ENCODE measurements at regions of chrX and their contacts with region 1.

Region 1: GRCh38 chrX:49043220-49043986 is at the start of gene TFE3:
- DNase-seq: peak; percentile 97 to 99
- ATAC-seq: peak; percentile 90 to 93
- H3K4me3 ChIP-seq: peak within 1 kb of the TSS; percentile 76 to 87 (median 79)
- H3K27ac ChIP-seq: peak within 1 kb of the TSS; percentile 93 to 100 (median 98)
- H3K4me1 ChIP-seq: peaks cover 9% of the 10 kb centered on the region in 2 donors
- H3K27me3 ChIP-seq: no peaks in the 10 kb centered on the region
- CTCF ChIP-seq: peak; percentile 41 to 64 (median 63)
- POLR2A ChIP-seq: peak; percentile 72 to 76
- total RNA-seq, gene TFE3: 29.3 to 44.5 (median 34.7) TPM

Region 2: GRCh38 chrX:48891402-48892288 is 151.8 kb before region 1 on chrX:
- in situ Hi-C with region 1: no loop called
- intact Hi-C with region 1: loop called (anchors 5 kb)
- DNase-seq: peak; percentile 76 to 81
- ATAC-seq: peak; percentile 96 to 97
- H3K4me3 ChIP-seq: peak overlapping the region; percentile 64 to 75 (median 68)
- H3K27ac ChIP-seq: peak overlapping the region; percentile 49 to 84 (median 78)
- H3K4me1 ChIP-seq: peaks cover 5 to 8% of the 10 kb centered on the region in 2 donors
- H3K27me3 ChIP-seq: no peaks in the 10 kb centered on the region
- CTCF ChIP-seq: peak; percentile 25 to 64 (median 52)
- POLR2A ChIP-seq: peak in 1 of 2 donors; percentile 4

Region 3: GRCh38 chrX:48917139-48918001 is 126.0 kb before region 1 on chrX:
- in situ Hi-C with region 1: no loop called
- intact Hi-C with region 1: loop called (anchors 1 kb)
- DNase-seq: peak; percentile 75 to 89
- ATAC-seq: peak; percentile 79
- H3K4me3 ChIP-seq: peak overlapping the region in 1 of 4 donors; percentile 68
- H3K27ac ChIP-seq: peak overlapping the region; percentile 31 to 89 (median 67)
- H3K4me1 ChIP-seq: peaks cover 0 to 4% of the 10 kb centered on the region in 2 donors
- H3K27me3 ChIP-seq: no peaks in the 10 kb centered on the region
- CTCF ChIP-seq: peak; percentile 90 to 94 (median 91)
- POLR2A ChIP-seq: no peak

Region 4: GRCh38 chrX:48957827-48958634 is 85.4 kb before region 1 on chrX:
- in situ Hi-C with region 1: loop called in 1 of 4 experiments (anchors 5 kb)
- intact Hi-C with region 1: loop called (anchors 1 kb)
- DNase-seq: peak; percentile 95 to 98
- ATAC-seq: peak; percentile 86
- H3K4me3 ChIP-seq: peak overlapping the region; percentile 59 to 75 (median 66)
- H3K27ac ChIP-seq: peak overlapping the region; percentile 86 to 95 (median 94)
- H3K4me1 ChIP-seq: peaks cover 9 to 15% of the 10 kb centered on the region in 2 donors
- H3K27me3 ChIP-seq: no peaks in the 10 kb centered on the region
- CTCF ChIP-seq: no peak
- POLR2A ChIP-seq: peak; percentile 50 to 64

Region 5: DNA sequence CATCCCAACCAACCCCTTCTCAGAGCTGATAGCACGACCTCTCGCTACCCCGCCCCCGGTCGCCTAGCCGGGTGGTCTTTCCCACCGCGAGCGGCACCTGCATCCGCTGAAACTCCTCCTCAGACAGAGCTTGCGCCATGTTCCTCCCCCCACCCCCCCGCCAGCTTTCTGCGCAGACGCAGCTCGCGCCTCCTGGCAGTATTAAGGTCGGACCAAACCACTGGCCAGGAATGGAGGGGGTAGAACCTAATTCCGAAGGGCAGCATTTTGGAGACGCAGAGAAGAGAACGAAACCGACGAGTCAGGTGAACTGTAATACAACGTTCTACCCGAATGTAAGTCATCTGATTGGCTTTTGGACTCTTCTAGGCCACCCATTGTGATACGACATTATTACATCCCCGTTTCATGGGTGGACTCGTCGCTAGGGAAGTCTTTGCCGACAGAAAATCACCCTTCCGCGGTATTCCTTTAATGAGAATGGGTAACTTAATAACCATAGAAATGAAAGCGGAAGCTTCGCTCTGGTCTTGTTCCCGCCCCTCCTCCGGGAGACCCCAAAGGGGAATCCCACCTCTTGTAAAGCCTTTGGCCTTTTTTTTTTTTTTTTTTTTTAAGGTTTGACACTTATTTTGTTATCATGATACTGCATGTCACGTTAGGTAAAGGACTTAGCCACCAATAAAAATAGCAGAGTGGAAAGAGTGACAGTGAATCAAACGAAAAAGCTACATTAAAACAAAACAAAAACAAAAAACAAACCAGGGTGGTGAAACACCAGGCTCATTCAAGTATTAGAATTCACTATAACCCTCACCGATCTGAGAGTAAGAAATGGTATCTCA is 41.1 kb before region 1 on chrX and contains the start of gene GRIPAP1:
- in situ Hi-C with region 1: no loop called
- intact Hi-C with region 1: loop called (anchors 1 kb)
- DNase-seq: peak; percentile 47 to 61
- ATAC-seq: peak; percentile 96 to 97
- H3K4me3 ChIP-seq: peak within 1 kb of the TSS; percentile 69 to 89 (median 75)
- H3K27ac ChIP-seq: peak within 1 kb of the TSS; percentile 77 to 89 (median 83)
- H3K4me1 ChIP-seq: peaks cover 3 to 7% of the 10 kb centered on the region in 2 donors
- H3K27me3 ChIP-seq: no peaks in the 10 kb centered on the region
- CTCF ChIP-seq: no peak
- POLR2A ChIP-seq: peak; percentile 46 to 53
- total RNA-seq, gene GRIPAP1: 8.6 to 19.3 (median 10.1) TPM

Region 6: GRCh38 chrX:49073601-49074571 is 30.5 kb after region 1 on chrX and contains the start of gene PRAF2:
- in situ Hi-C with region 1: no loop called
- intact Hi-C with region 1: loop called (anchors 1 kb)
- DNase-seq: peak; percentile 86 to 92
- ATAC-seq: peak; percentile 97 to 98
- H3K4me3 ChIP-seq: peak within 1 kb of the TSS; percentile 60 to 72 (median 65)
- H3K27ac ChIP-seq: peak within 1 kb of the TSS; percentile 78 to 88 (median 81)
- H3K4me1 ChIP-seq: peaks cover 8 to 19% of the 10 kb centered on the region in 2 donors
- H3K27me3 ChIP-seq: no peaks in the 10 kb centered on the region
- CTCF ChIP-seq: peak in 1 of 5 experiments; percentile 22
- POLR2A ChIP-seq: peak; percentile 47 to 48
- total RNA-seq, gene PRAF2: 4.5 to 6.6 (median 4.7) TPM

Region 7: GRCh38 chrX:49100704-49101628 is 57.6 kb after region 1 on chrX:
- in situ Hi-C with region 1: no loop called
- intact Hi-C with region 1: loop called (anchors 1 kb)
- DNase-seq: peak; percentile 78 to 88
- ATAC-seq: peak; percentile 98
- H3K4me3 ChIP-seq: peak overlapping the region; percentile 62 to 78 (median 68)
- H3K27ac ChIP-seq: peak overlapping the region; percentile 70 to 89 (median 86)
- H3K4me1 ChIP-seq: no peaks in the 10 kb centered on the region
- H3K27me3 ChIP-seq: no peaks in the 10 kb centered on the region
- CTCF ChIP-seq: no peak
- POLR2A ChIP-seq: peak; percentile 54 to 60